ENCODE measurements at regions of chr2 and their contacts with region 1.

Region 1: GRCh38 chr2:173402405-173402974 is 47.8 kb downstream of the CDCA7 start:
- DNase-seq: peak; percentile 78
- CTCF ChIP-seq: peak; percentile 69

Region 2: GRCh38 chr2:173545364-173545763 is 142.9 kb after region 1 on chr2:
- in situ Hi-C with region 1: no loop called
- DNase-seq: no peak
- CTCF ChIP-seq: no peak

Region 3: DNA sequence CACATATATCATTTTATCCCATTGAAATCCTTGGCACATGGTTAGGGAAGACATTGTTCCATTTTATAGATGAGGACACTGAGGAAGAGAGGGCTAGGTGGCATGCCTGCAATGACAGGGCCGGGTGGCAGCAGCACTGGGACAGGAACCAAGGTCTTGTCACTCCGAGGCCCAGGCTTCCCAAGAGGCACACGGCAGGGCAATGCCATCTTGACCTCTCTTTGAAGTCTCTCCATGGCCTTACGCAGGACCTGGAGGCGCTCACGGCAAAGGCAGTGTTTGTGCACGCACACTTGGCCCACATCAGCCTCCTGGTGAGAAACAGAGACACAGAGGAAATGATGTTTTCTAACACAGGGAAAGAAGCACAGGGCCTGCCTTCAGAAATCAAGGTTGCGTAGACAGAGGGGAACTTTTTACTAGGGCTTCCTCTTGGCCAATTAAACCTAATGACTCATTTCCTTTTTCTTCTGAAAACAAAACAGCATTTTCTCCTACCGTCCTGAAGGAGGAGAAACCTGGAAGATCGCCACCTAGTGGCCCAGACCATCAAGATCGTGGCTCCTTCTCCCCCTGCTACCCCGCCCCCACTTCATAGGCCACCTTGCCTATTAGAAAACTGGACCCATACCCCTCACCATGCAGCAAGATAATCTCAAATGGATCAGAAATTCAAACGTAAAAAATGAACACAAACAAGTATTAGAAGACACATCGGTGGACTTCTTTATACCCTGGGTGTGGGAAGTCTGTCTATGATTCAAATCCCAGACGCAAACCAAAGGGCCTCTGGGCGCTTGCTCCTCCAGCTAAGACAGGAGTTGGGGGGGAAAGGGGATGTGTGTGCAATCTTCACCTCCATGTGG is 637.3 kb after region 1 on chr2:
- in situ Hi-C with region 1: loop called (anchors 25 kb)
- DNase-seq: peak; percentile 78
- CTCF ChIP-seq: peak; percentile 79

Region 4: DNA sequence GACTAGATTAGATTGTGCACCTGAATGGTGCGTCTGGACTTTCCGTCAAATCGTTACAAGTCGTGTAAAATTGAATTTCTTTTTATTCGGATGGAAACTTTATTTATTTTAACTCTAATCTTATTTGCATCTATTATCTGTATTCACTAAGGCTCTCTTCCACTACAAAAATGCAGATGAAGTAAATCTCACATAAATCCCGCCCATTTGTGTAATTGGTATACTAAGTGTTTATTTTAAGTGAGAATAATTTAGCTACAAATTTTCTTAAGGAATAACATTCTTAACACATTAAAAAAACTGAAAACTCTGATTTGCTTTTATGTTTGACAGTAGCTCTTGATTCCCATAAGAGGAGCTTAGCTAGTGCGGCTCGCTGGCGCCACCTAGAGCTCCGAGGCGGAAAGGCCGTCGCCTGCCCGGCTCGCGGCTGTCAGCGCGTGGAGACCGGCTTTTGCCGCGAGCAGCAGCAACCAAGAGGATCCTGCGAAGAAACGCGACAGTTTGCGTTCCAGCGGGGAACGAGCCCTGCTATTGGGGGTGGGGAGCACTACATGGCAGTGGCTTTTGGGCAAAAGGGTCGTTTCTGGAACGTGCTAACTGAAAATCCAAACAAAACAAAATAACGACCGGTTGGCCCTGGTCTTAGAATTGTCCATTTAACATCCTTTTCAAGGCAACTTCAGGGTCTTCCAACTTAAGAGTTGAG is 939.0 kb after region 1 on chr2:
- in situ Hi-C with region 1: loop called (anchors 10 kb)
- DNase-seq: peak; percentile 88
- CTCF ChIP-seq: peak; percentile 98

Measured in GM13976 (cell line).